CD4-positive, alpha-beta T cell (primary cell): ENCODE measurements at regions of chr1 and their contacts with region 1.

Region 1: GRCh38 chr1:13730751-13731482 is 30.9 kb downstream of the PRDM2 start:
- DNase-seq: peak; percentile 71 to 96 (median 80)
- ATAC-seq: peak; percentile 92
- H3K4me3 ChIP-seq: peak overlapping the region; percentile 32
- H3K4me3 Mint-ChIP-seq: peak overlapping the region; percentile 84
- H3K27ac ChIP-seq: peak overlapping the region; percentile 94 to 95
- H3K27ac Mint-ChIP-seq: peak overlapping the region; percentile 98
- H3K4me1 ChIP-seq: peaks cover 37% of the 10 kb centered on the region
- H3K4me1 Mint-ChIP-seq: peaks cover 88% of the 10 kb centered on the region
- H3K27me3 ChIP-seq: no peaks in the 10 kb centered on the region
- H3K27me3 Mint-ChIP-seq: no peaks in the 10 kb centered on the region
- CTCF ChIP-seq: peak; percentile 26

Region 2: DNA sequence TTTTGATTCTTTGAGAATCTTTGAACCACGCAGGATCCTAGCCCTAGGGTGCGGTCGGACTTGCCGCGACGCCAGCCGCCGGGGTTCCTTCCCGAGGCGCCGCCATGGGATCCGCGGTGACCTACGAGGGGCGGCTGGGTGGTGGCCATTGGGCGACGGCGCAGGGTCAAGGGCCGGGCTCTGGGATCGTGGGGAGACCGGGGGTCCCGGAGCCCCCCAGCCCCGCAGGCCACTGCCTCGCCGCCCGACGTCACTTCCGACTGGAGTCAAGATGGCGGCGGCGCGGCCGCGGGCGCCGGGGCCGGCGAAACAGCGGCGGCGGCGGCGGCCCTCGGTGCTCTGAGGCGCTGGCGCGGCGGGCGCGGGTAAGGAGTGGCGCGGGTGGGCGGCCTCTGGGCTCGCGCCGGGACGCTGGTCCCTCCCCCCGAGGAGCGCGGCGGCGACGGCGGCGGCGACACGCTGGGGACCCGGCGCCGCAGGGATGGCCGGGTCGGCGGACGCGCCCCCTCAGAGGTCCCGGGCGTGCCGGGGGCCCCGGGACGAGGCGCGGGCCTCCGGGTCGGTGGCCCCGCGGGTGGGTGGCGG is 30.9 kb before region 1 on chr1 and contains the start of gene PRDM2:
- CTCF ChIA-PET with region 1: interaction called, 13 read pairs
- POLR2A ChIA-PET with region 1: interaction called, 25 read pairs
- intact Hi-C with region 1: loop called (anchors 1 to 2 kb)
- DNase-seq: peak; percentile 28 to 86 (median 50)
- ATAC-seq: peak; percentile 40
- H3K4me3 ChIP-seq: peak within 1 kb of the TSS; percentile 87
- H3K4me3 Mint-ChIP-seq: peak within 1 kb of the TSS; percentile 93
- H3K27ac ChIP-seq: peak within 1 kb of the TSS; percentile 95 to 96
- H3K27ac Mint-ChIP-seq: peak within 1 kb of the TSS; percentile 95
- H3K4me1 ChIP-seq: peaks cover 27% of the 10 kb centered on the region
- H3K4me1 Mint-ChIP-seq: peaks cover 53% of the 10 kb centered on the region
- H3K27me3 ChIP-seq: no peaks in the 10 kb centered on the region
- H3K27me3 Mint-ChIP-seq: no peaks in the 10 kb centered on the region
- CTCF ChIP-seq: no peak
- total RNA-seq, gene PRDM2: 136 to 140 TPM

Region 3: GRCh38 chr1:13748610-13749505 is 17.9 kb after region 1 on chr1:
- CTCF ChIA-PET with region 1: interaction called, 17 read pairs
- POLR2A ChIA-PET with region 1: interaction called, 171 read pairs
- intact Hi-C with region 1: loop called (anchors 1 kb)
- DNase-seq: peak; percentile 91 to 98 (median 96)
- ATAC-seq: peak; percentile 88
- H3K4me3 ChIP-seq: peak overlapping the region; percentile 78
- H3K4me3 Mint-ChIP-seq: peak overlapping the region; percentile 93
- H3K27ac ChIP-seq: peak overlapping the region; percentile 81 to 90
- H3K27ac Mint-ChIP-seq: peak overlapping the region; percentile 95
- H3K4me1 ChIP-seq: peaks cover 24% of the 10 kb centered on the region
- H3K4me1 Mint-ChIP-seq: peaks cover 60% of the 10 kb centered on the region
- H3K27me3 ChIP-seq: no peaks in the 10 kb centered on the region
- H3K27me3 Mint-ChIP-seq: no peaks in the 10 kb centered on the region
- CTCF ChIP-seq: no peak

Region 4: GRCh38 chr1:13781907-13782644 is 51.2 kb after region 1 on chr1:
- CTCF ChIA-PET with region 1: no interaction called
- POLR2A ChIA-PET with region 1: no interaction called
- intact Hi-C with region 1: loop called in 1 of 2 experiments (anchors 10 kb)
- DNase-seq: no peak
- ATAC-seq: no peak
- H3K4me3 ChIP-seq: no peak overlapping the region
- H3K4me3 Mint-ChIP-seq: peak overlapping the region; percentile 38
- H3K27ac ChIP-seq: no peak overlapping the region
- H3K27ac Mint-ChIP-seq: peak overlapping the region; percentile 65
- H3K4me1 ChIP-seq: peaks cover 11% of the 10 kb centered on the region
- H3K4me1 Mint-ChIP-seq: peaks cover 86% of the 10 kb centered on the region
- H3K27me3 ChIP-seq: no peaks in the 10 kb centered on the region
- H3K27me3 Mint-ChIP-seq: no peaks in the 10 kb centered on the region
- CTCF ChIP-seq: no peak